Activated CD4-positive, alpha-beta T cell treated with anti-CD3 and anti-CD28 coated beads for 36 hours (primary cell): ENCODE measurements at regions of chr17 and their contacts with region 1.

Region 1: DNA sequence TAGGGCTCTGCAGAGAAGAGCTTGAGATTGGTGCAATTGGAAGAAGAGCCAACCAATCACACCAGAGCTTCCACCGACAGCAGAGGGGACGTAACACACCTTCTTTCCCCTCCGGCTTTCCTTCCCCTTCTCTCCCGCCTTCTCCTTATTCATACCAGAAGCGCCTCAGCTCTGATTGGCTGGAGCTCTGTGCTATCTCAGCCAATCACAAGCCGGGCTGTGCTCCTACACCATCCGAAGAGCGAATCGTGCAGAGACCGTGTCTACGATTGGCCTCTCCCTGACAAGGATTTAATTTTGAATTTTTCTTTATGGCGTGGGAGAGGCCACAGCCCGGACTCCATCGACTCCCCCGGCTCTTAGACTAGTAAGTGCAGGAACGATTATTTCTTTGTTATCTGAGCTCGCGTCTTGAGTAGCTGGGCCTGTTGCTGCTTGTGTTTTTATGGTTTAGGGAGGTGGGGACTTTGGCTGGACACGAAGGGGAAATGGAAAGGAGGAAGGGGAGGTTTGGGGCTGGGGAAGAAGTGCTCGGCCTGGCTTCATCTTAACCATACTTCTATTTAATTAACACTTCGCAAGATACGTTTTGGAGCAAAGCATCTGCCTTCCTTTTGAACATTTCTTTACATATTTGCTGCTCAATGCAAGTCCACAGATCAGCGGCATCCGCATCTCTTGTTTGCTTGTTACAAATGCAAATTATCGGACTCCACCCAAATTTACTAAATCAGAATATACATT is at the start of gene PRR11:
- DNase-seq: peak; percentile 96
- ATAC-seq: peak; percentile 89
- H3K4me3 Mint-ChIP-seq: no peak within 1 kb of the TSS
- H3K27ac Mint-ChIP-seq: no peak within 1 kb of the TSS
- H3K4me1 Mint-ChIP-seq: peaks cover 37% of the 10 kb centered on the region
- H3K27me3 Mint-ChIP-seq: no peaks in the 10 kb centered on the region
- total RNA-seq, gene PRR11: 73.6 to 95.9 TPM

Region 2: GRCh38 chr17:58337600-58338453 is 817.8 kb before region 1 on chr17:
- CTCF ChIA-PET with region 1: no interaction called
- POLR2A ChIA-PET with region 1: no interaction called
- intact Hi-C with region 1: loop called in 1 of 2 experiments (anchors 10 kb)
- DNase-seq: peak; percentile 97
- ATAC-seq: peak; percentile 57
- H3K4me3 Mint-ChIP-seq: peak overlapping the region; percentile 100
- H3K27ac Mint-ChIP-seq: peak overlapping the region; percentile 99
- H3K4me1 Mint-ChIP-seq: peaks cover 26% of the 10 kb centered on the region
- H3K27me3 Mint-ChIP-seq: no peaks in the 10 kb centered on the region

Region 3: GRCh38 chr17:58658804-58659713 is 496.6 kb before region 1 on chr17:
- CTCF ChIA-PET with region 1: no interaction called
- POLR2A ChIA-PET with region 1: interaction called, 3 read pairs
- intact Hi-C with region 1: loop called in 1 of 2 experiments (anchors 1 kb)
- DNase-seq: peak; percentile 84
- ATAC-seq: peak; percentile 91
- H3K4me3 Mint-ChIP-seq: peak overlapping the region; percentile 70
- H3K27ac Mint-ChIP-seq: peak overlapping the region; percentile 97
- H3K4me1 Mint-ChIP-seq: peaks cover 18% of the 10 kb centered on the region
- H3K27me3 Mint-ChIP-seq: peaks cover 3% of the 10 kb centered on the region

Region 4: GRCh38 chr17:58809564-58809936 is 346.1 kb before region 1 on chr17:
- CTCF ChIA-PET with region 1: no interaction called
- POLR2A ChIA-PET with region 1: no interaction called
- intact Hi-C with region 1: no loop called
- DNase-seq: no peak
- ATAC-seq: no peak
- H3K4me3 Mint-ChIP-seq: no peak overlapping the region
- H3K27ac Mint-ChIP-seq: no peak overlapping the region
- H3K4me1 Mint-ChIP-seq: no peaks in the 10 kb centered on the region
- H3K27me3 Mint-ChIP-seq: peaks cover 14% of the 10 kb centered on the region

Region 5: GRCh38 chr17:59038734-59039133 is 116.9 kb before region 1 on chr17:
- CTCF ChIA-PET with region 1: no interaction called
- POLR2A ChIA-PET with region 1: no interaction called
- intact Hi-C with region 1: loop called in 1 of 2 experiments (anchors 1 kb)
- DNase-seq: peak; percentile 62
- ATAC-seq: peak; percentile 96
- H3K4me3 Mint-ChIP-seq: no peak overlapping the region
- H3K27ac Mint-ChIP-seq: no peak overlapping the region
- H3K4me1 Mint-ChIP-seq: peaks cover 6% of the 10 kb centered on the region
- H3K27me3 Mint-ChIP-seq: no peaks in the 10 kb centered on the region

Region 6: GRCh38 chr17:59220376-59221158 is 65.0 kb after region 1 on chr17 and contains the start of gene GDPD1:
- CTCF ChIA-PET with region 1: interaction called, 3 read pairs
- POLR2A ChIA-PET with region 1: interaction called, 4 read pairs
- intact Hi-C with region 1: loop called (anchors 1 to 2 kb)
- DNase-seq: peak; percentile 99
- ATAC-seq: peak; percentile 99
- H3K4me3 Mint-ChIP-seq: peak within 1 kb of the TSS; percentile 93
- H3K27ac Mint-ChIP-seq: peak within 1 kb of the TSS; percentile 86
- H3K4me1 Mint-ChIP-seq: peaks cover 12% of the 10 kb centered on the region
- H3K27me3 Mint-ChIP-seq: no peaks in the 10 kb centered on the region
- total RNA-seq, gene GDPD1: 2.5 to 2.7 TPM